A549 (cell line): ENCODE measurements at regions of chr4 and their contacts with region 1.

Region 1: GRCh38 chr4:38902695-38903094 is 35.1 kb downstream of the FAM114A1 start:
- DNase-seq: peak; percentile 13 to 44
- ATAC-seq: peak; percentile 81 to 83
- H3K4me3 ChIP-seq: no peak overlapping the region
- H3K27ac ChIP-seq: no peak overlapping the region
- H3K4me1 ChIP-seq: peaks cover 23% of the 10 kb centered on the region
- CTCF ChIP-seq: peak; percentile 49
- EP300 ChIP-seq: no peak
- POLR2A ChIP-seq: no peak
- RAD21 ChIP-seq: peak; percentile 70 to 71

Region 2: DNA sequence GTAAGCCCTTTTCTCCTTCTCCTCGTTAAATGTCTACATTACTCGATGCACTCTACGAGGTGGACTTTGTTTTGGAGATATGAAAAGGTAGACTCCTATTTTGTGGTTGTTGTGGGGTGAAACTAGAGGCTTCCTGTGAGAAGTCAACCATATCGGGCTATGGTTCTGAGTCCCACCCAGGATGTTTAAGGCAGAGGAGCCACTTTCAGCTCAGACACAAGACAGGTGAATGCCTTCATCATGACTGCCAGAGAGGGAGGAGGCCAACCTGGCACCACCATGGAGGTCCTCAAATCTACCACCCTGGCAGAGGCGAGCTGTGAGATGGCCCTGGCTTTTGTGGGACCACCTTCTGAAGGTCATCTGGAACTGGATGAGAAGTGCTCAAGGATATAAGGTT is 393.1 kb before region 1 on chr4:
- CTCF ChIA-PET with region 1: no interaction called
- POLR2A ChIA-PET with region 1: no interaction called
- DNase-seq: no peak
- ATAC-seq: no peak
- H3K4me3 ChIP-seq: no peak overlapping the region
- H3K27ac ChIP-seq: no peak overlapping the region
- H3K4me1 ChIP-seq: no peaks in the 10 kb centered on the region
- CTCF ChIP-seq: no peak
- EP300 ChIP-seq: no peak
- POLR2A ChIP-seq: no peak
- RAD21 ChIP-seq: no peak

Region 3: DNA sequence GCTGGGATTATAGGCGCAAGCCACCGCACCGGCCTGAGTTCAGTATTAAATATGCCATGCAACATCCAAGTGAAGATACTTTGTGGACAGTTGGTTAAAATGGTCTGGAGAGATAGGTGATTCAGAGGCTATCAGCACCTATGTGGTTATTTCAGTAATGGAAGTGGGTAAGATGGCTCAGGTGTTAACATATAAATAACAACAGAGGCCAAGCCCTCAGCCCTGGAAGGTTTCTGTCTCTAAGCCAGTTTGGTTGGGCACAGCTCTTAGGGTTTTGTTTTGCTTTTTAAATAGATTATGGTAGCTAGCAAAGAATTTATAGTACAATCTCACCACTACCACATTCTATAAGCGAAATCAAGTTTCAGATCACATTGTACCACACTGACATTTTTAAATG is 18.4 kb before region 1 on chr4:
- CTCF ChIA-PET with region 1: interaction called, 14 read pairs
- POLR2A ChIA-PET with region 1: no interaction called
- DNase-seq: no peak
- ATAC-seq: no peak
- H3K4me3 ChIP-seq: no peak overlapping the region
- H3K27ac ChIP-seq: no peak overlapping the region
- H3K4me1 ChIP-seq: peaks cover 8% of the 10 kb centered on the region; the same call in 2 of the 3 replicates
- CTCF ChIP-seq: no peak
- EP300 ChIP-seq: no peak
- POLR2A ChIP-seq: no peak
- RAD21 ChIP-seq: no peak

Region 4: DNA sequence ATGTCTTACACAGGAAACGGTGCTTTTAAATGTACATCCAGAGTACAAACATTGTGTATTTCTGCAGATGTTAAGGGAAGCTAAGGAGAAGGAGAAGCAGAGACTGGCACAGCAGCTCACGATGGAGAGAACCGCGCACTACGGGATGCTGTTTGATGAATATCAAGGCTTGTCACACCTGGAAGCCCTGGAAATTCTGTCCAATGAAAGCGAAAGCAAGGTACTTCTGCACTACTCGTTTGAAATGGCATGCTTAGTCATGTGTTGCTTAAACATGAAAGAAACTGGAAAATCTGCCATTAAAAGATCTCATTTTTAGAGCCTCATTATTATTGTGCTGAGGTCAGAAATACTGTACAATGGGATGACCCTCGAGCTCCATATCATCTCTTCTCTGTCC is 12.2 kb after region 1 on chr4:
- CTCF ChIA-PET with region 1: interaction called, 11 read pairs
- POLR2A ChIA-PET with region 1: no interaction called
- DNase-seq: no peak
- ATAC-seq: no peak
- H3K4me3 ChIP-seq: no peak overlapping the region
- H3K27ac ChIP-seq: no peak overlapping the region
- H3K4me1 ChIP-seq: no peaks in the 10 kb centered on the region
- CTCF ChIP-seq: no peak
- EP300 ChIP-seq: no peak
- POLR2A ChIP-seq: no peak
- RAD21 ChIP-seq: no peak

Region 5: GRCh38 chr4:39083164-39083563 is 180.5 kb after region 1 on chr4:
- CTCF ChIA-PET with region 1: no interaction called
- POLR2A ChIA-PET with region 1: no interaction called
- DNase-seq: no peak
- ATAC-seq: no peak
- H3K4me3 ChIP-seq: no peak overlapping the region
- H3K27ac ChIP-seq: no peak overlapping the region
- H3K4me1 ChIP-seq: no peaks in the 10 kb centered on the region
- CTCF ChIP-seq: no peak
- EP300 ChIP-seq: no peak
- POLR2A ChIP-seq: no peak
- RAD21 ChIP-seq: no peak

Region 6: GRCh38 chr4:39103291-39103690 is 200.6 kb after region 1 on chr4:
- CTCF ChIA-PET with region 1: interaction called, 10 read pairs
- POLR2A ChIA-PET with region 1: no interaction called
- DNase-seq: peak in 1 of 2 experiments; percentile 33
- ATAC-seq: peak in 1 of 2 experiments; percentile 70; a peak in 3 of 6 replicates
- H3K4me3 ChIP-seq: no peak overlapping the region
- H3K27ac ChIP-seq: no peak overlapping the region
- H3K4me1 ChIP-seq: peaks cover 3% of the 10 kb centered on the region; the same call in 1 of the 3 replicates
- CTCF ChIP-seq: no peak
- EP300 ChIP-seq: no peak
- POLR2A ChIP-seq: no peak
- RAD21 ChIP-seq: peak in 1 of 2 experiments; percentile 11; a peak in 1 of 5 replicates

Region 7: DNA sequence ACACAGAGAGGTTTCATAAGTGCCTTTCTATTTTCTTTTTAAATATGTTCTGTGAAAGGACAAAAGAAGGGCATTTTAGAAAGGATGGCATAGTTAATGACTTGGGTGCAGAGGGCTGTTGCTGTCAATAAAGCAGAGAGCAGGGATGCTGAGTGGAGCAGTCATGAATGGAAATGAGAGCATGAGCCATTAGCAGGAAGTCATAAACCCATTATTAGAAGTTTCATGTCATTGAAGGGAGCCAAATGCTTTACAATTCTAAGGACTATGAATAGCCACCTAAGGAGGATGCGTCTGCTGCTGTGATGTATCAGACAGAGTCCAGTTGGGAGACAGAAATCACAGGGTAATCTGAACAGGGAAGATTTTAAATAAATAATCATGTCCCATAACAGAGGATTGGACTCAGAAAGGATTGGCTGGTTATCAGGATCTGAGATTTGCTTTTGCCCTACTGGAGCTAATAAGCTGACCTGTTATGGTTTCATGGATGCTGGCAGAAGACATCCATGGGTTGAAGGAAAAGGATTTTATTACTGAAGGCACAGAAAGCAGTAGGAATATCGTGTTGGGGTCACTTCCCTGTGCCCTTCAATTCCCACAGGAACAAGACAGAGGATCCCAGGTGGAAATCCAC is 232.1 kb after region 1 on chr4:
- CTCF ChIA-PET with region 1: interaction called, 29 read pairs
- POLR2A ChIA-PET with region 1: no interaction called
- DNase-seq: no peak
- ATAC-seq: peak; percentile 17 to 37; a peak in 3 of 6 replicates
- H3K4me3 ChIP-seq: no peak overlapping the region
- H3K27ac ChIP-seq: peak overlapping the region in 1 of 2 experiments; percentile 71; a peak in 3 of 6 replicates
- H3K4me1 ChIP-seq: peaks cover 3% of the 10 kb centered on the region; the same call in 1 of the 3 replicates
- CTCF ChIP-seq: no peak
- EP300 ChIP-seq: no peak
- POLR2A ChIP-seq: no peak
- RAD21 ChIP-seq: no peak